ENCODE measurements at regions of chr12 and their contacts with region 1.

Region 1: DNA sequence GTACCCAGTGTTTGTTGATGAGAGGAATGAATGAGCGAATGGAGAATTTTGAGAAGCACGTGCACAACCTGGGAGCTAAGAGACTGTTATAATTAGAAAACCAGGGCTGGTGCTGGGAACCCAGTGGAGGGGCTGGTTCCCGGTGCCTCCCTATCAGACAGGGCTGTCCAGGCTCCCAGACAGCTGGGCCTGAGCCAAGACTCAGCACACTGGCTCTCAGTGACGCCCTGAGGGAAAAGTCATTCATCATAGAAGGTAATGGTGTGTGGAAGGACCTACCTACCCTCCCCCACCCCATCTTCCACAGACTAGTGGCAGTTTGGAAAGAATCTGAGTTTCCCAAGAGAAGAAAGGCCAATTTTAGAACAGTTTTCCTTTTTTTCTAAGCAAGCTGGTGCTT is 34.7 kb downstream of the KCNA5 start:
- DNase-seq: no peak
- H3K4me3 ChIP-seq: no peak overlapping the region
- H3K27ac ChIP-seq: peak overlapping the region in 1 of 4 donors; percentile 16
- H3K4me1 ChIP-seq: peaks cover 0 to 31% (median 20%) of the 10 kb centered on the region in 4 donors
- H3K27me3 ChIP-seq: no peaks in the 10 kb centered on the region
- CTCF ChIP-seq: no peak
- EP300 ChIP-seq: no peak
- POLR2A ChIP-seq: no peak

Region 2: GRCh38 chr12:5043589-5044419 is 34.6 kb before region 1 on chr12 and contains the start of gene KCNA5:
- intact Hi-C with region 1: loop called (anchors 5 kb)
- DNase-seq: peak; percentile 77
- H3K4me3 ChIP-seq: peak within 1 kb of the TSS; percentile 31 to 48 (median 40)
- H3K27ac ChIP-seq: peak within 1 kb of the TSS; percentile 14 to 54 (median 28)
- H3K4me1 ChIP-seq: peaks cover 0 to 51% (median 35%) of the 10 kb centered on the region in 4 donors
- H3K27me3 ChIP-seq: peaks cover 0 to 27% (median 0%) of the 10 kb centered on the region in 3 donors
- CTCF ChIP-seq: no peak
- EP300 ChIP-seq: no peak
- POLR2A ChIP-seq: no peak
- total RNA-seq, gene KCNA5: 2.2 to 20.2 (median 5.8) TPM